OCI-LY7 (cell line): ENCODE measurements at regions of chr5 and their contacts with region 1.

Region 1: DNA sequence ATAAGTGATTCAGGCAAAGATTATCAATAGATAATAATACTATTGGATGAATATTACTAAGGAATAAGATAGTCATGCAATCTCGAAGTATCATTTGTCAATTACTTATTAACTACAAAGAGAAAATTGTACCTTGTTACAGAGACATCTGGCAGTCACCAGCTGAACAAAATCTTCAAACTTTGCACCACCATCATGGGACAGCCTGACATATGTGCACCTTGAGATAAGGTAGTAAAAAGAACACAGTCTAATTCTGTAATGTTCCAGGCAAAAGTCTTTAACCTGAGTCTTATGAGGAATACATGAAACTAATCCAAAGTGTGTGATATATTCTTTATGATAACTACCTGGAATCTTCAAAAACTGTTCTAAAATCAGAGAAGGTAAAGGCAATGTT is 423.0 kb upstream of the ZNF608 start:
- DNase-seq: no peak
- H3K4me3 ChIP-seq: no peak overlapping the region
- H3K27ac ChIP-seq: no peak overlapping the region
- H3K4me1 ChIP-seq: no peaks in the 10 kb centered on the region
- CTCF ChIP-seq: no peak

Region 2: GRCh38 chr5:125081101-125081500 is 88.3 kb before region 1 on chr5:
- CTCF ChIA-PET with region 1: no interaction called
- POLR2A ChIA-PET with region 1: no interaction called
- intact Hi-C with region 1: no loop called
- DNase-seq: no peak
- H3K4me3 ChIP-seq: no peak overlapping the region
- H3K27ac ChIP-seq: no peak overlapping the region
- H3K4me1 ChIP-seq: no peaks in the 10 kb centered on the region
- CTCF ChIP-seq: no peak

Region 3: DNA sequence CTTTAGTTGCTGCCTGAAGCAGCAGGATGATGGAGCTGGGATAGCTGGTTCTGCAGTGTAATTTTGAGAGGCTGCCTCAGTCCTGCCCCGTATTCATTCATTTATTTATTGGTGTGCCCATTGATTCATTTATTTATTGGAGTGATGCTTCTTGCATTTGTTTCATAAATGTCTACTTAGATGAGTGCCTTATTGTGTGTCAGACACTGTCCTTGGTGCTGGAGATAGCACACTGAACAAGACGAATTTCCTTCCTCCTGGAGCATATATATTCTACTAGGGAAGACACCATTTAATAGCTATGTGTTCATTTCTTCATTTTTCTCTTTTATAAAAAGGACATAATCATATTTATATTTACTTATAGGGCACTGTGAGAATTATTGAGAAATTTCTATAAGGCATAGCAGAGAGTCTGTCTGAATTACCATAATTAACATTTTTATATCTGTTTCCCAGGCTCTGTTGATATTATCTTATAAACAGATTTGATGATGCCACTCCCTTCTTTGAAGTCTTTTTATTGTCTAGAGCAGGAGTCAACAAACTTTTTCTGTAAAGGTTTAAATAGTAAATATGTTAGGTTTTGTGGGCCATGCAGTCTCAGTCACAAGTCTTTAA is 10.9 kb after region 1 on chr5:
- CTCF ChIA-PET with region 1: interaction called, 4 read pairs
- POLR2A ChIA-PET with region 1: interaction called, 16 read pairs
- intact Hi-C with region 1: no loop called
- DNase-seq: no peak
- H3K4me3 ChIP-seq: no peak overlapping the region
- H3K27ac ChIP-seq: no peak overlapping the region
- H3K4me1 ChIP-seq: no peaks in the 10 kb centered on the region
- CTCF ChIP-seq: no peak